Psoas muscle (tissue), 8 donors: ENCODE measurements at regions of chr12 and their contacts with region 1.

Region 1: DNA sequence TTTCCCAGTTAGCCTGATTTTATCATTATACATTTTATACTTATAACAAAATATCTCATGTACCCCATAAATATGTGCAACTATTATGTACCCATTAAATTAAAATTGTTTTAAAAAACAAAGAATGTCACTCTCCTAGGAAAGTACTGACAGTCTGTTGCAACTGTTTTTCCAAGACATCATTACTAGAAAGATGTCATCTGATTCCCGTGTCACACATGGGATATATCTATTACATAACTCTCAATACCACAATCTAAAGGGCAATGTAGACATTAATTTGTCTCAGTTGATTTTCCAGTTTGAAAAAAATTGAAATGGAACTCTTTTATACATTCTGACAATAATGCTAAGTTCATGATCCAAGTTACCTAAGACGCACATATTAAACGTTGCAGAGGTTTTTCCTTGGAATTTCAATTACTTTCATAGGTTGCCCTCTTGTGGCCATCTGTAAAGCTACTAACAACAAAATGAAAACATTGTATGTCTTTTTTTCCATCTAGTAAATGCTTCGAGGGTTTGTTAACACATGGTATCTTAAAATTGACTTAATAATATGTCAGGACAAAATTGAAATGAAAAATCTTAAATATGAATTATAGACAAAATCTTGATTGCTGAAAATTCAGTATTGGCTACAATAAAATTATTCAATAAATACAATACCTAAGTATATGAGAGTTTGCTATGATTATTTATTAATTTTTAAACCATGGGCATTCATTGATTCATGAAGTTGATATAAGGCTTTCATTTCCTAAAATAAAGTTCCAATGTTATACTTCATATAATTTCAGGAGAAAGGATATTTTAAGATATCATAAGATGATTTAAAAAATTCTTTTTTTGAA is 131.6 kb downstream of the PPFIA2 start:
- DNase-seq: no peak
- ATAC-seq: no peak
- H3K4me3 ChIP-seq: no peak overlapping the region
- H3K27ac ChIP-seq: no peak overlapping the region
- H3K4me1 ChIP-seq: no peaks in the 10 kb centered on the region
- H3K27me3 ChIP-seq: no peaks in the 10 kb centered on the region
- CTCF ChIP-seq: peak; percentile 52

Region 2: DNA sequence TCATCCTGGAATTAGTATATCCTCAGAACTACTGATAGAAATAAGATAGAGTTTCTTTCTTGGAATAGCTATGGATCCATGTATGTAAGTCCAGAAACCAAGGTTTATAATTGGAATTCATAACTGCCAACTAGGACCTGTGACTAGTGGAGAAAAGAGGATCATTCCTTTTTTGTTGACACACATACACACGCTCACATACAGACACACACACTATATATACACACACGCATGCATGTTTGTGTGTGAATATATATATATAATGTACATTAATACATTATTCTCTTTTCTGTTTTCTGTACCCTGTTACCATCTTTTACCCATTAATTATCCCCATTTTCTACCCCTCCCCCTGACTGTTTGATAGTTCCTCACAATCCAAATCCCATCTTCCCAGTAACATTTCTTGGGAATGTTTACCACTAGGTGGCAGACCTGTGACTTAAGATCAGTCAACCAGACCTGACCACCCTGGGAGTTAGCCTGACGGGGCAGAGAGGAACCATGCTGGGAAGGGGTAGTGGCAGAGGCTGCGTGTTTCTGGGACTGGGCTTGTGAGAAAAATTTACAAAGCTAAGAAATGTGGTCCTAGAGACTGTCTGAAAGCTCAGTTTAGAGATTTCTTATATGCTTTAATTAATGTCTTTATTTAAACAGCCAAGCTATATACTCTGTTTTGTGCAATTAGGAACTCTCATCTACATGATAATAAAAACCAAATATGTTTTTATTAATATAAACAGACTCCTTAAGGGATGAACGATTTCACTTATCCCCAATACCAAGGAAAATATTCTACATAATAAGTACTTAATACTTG is 176.4 kb before region 1 on chr12:
- intact Hi-C with region 1: loop called in 1 of 2 experiments (anchors 10 kb)
- DNase-seq: no peak
- ATAC-seq: peak in 1 of 4 donors; percentile 54
- H3K4me3 ChIP-seq: no peak overlapping the region
- H3K27ac ChIP-seq: no peak overlapping the region
- H3K4me1 ChIP-seq: no peaks in the 10 kb centered on the region
- H3K27me3 ChIP-seq: no peaks in the 10 kb centered on the region
- CTCF ChIP-seq: peak; percentile 31

Region 3: DNA sequence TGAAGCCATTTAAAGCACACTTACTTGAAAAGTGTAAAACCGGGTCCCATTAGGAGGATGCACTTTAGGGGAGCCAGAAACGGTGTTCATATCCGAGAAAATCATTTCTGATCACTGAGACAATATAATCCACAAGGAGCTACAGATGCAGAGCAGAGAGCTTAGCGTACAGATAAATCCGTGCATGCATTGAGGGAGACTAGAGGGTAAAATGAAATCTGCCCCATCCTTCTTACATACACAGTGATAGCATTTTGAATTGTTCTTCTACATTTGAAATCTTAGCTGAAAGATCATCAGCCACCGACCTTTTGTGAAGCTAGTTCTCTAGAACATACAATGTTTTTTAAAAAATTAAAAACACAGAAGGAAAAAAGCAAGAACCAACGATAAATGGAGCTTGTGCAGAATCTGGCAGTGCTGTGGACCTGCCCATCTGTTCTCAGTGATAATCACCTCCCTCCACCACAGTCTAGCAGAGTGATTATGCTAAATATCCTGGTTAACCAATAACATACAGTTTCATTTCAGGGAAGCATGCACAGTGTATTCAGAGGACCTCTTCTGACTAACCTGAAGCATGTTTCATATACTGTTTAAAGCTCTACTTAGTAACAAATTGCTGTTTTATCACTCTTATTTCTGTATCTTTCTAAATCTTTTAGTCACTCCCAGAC is 29.5 kb before region 1 on chr12:
- intact Hi-C with region 1: loop called in 1 of 2 experiments (anchors 1 kb)
- DNase-seq: no peak
- ATAC-seq: no peak
- H3K4me3 ChIP-seq: no peak overlapping the region
- H3K27ac ChIP-seq: no peak overlapping the region
- H3K4me1 ChIP-seq: no peaks in the 10 kb centered on the region
- H3K27me3 ChIP-seq: no peaks in the 10 kb centered on the region
- CTCF ChIP-seq: no peak